MCF 10A (cell line): ENCODE measurements at regions of chr10 and their contacts with region 1.

Region 1: DNA sequence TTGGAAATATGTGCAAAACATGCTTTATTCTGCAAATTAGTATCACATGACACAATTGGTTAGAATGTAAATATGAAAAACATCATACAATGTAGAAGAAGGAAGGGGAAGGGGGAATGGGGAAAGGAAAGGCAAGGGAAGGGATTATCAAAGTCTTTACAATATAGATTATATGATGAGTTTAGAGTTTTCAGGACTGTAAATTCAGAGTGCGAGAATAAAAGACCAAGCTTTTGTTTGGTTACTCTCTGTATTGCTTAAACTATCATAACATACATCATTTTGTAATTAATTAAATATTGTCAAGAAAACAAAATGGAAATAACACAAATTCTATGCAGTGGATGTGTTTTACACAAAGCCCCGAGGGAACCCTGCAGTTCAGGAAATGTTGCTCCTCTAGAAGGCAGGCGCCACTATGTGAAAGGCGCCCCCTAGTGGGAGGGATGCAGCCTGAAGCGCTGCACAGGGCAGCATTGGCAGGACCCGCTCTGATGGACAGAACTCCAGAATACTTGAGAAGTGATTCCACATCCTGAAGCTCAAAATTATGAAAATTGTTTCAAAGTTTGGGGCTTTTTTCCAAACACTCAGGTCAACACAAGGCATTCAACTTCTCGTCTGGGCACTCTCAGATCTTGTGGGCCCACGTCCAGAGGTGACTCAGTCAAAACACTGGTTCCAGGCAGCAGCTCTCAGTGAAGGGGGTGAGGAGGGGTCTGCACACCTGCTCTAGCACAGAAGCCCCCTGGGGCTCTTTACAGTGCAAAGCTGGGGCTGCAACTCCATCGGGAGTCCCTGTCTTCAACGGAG is 31.6 kb upstream of the TMEM254 start:
- DNase-seq: peak; percentile 78
- H3K4me3 Mint-ChIP-seq: no peak overlapping the region
- H3K27ac Mint-ChIP-seq: no peak overlapping the region
- H3K4me1 Mint-ChIP-seq: no peaks in the 10 kb centered on the region
- H3K27me3 Mint-ChIP-seq: no peaks in the 10 kb centered on the region
- CTCF ChIP-seq: peak; percentile 91

Region 2: GRCh38 chr10:79542626-79543025 is 504.2 kb before region 1 on chr10:
- CTCF ChIA-PET with region 1: no interaction called
- POLR2A ChIA-PET with region 1: no interaction called
- intact Hi-C with region 1: loop called (anchors 5 kb)
- DNase-seq: no peak
- H3K4me3 Mint-ChIP-seq: no peak overlapping the region
- H3K27ac Mint-ChIP-seq: no peak overlapping the region
- H3K4me1 Mint-ChIP-seq: no peaks in the 10 kb centered on the region
- H3K27me3 Mint-ChIP-seq: peaks cover 37% of the 10 kb centered on the region
- CTCF ChIP-seq: no peak

Region 3: DNA sequence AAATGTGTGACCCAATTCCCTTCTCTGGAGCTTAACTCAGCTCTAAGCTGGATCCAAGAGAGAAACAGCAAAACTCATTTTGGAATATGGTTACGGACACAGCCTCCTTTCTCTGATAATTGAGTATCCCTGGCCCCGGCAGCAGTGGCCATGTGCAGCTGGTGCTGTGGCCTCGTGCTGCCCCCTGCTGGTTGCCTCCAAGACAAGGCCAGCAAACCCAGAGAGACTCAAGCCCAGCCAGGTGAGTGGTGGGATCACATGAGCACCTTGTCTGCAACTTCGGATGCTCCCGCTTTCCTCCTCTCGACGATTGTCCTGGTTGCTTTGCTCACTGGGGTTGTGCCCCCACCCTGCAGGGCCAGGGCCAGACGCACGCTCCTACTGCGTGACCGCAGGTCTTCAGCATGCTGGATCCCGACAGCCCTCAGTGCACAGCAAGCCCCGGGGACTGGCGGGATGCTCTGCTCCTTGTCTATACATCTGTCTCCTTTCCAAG is 117.4 kb before region 1 on chr10:
- CTCF ChIA-PET with region 1: interaction called, 7 read pairs
- POLR2A ChIA-PET with region 1: no interaction called
- intact Hi-C with region 1: loop called (anchors 5 kb)
- DNase-seq: peak; percentile 74
- H3K4me3 Mint-ChIP-seq: no peak overlapping the region
- H3K27ac Mint-ChIP-seq: no peak overlapping the region
- H3K4me1 Mint-ChIP-seq: peaks cover 14% of the 10 kb centered on the region
- H3K27me3 Mint-ChIP-seq: peaks cover 45% of the 10 kb centered on the region
- CTCF ChIP-seq: peak; percentile 91

Region 4: GRCh38 chr10:80025281-80025680 is 21.6 kb before region 1 on chr10:
- CTCF ChIA-PET with region 1: interaction called, 13 read pairs
- POLR2A ChIA-PET with region 1: no interaction called
- intact Hi-C with region 1: no loop called
- DNase-seq: no peak
- H3K4me3 Mint-ChIP-seq: no peak overlapping the region
- H3K27ac Mint-ChIP-seq: no peak overlapping the region
- H3K4me1 Mint-ChIP-seq: no peaks in the 10 kb centered on the region
- H3K27me3 Mint-ChIP-seq: no peaks in the 10 kb centered on the region
- CTCF ChIP-seq: no peak

Region 5: DNA sequence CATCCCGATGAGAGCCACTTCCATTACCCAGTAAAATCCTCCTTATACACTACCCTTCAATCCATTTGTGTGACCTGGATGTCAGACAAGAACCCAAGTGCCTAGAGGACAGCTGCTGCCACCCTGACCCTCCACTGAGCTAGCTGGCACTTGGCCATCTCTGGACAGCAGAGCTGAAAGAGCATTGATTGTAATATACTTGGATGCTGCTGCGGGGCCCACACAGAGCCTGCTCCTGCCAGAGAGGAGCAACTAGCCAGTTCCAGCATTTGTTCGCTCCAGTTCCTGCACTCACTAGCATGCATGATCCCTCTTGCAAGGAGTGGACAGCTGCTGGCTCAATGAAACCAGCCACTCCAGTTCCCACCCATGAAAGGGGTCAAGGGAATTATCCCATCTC is 23.2 kb after region 1 on chr10:
- CTCF ChIA-PET with region 1: interaction called, 15 read pairs
- POLR2A ChIA-PET with region 1: interaction called, 3 read pairs
- intact Hi-C with region 1: no loop called
- DNase-seq: no peak
- H3K4me3 Mint-ChIP-seq: no peak overlapping the region
- H3K27ac Mint-ChIP-seq: no peak overlapping the region
- H3K4me1 Mint-ChIP-seq: no peaks in the 10 kb centered on the region
- H3K27me3 Mint-ChIP-seq: no peaks in the 10 kb centered on the region
- CTCF ChIP-seq: no peak

Region 6: DNA sequence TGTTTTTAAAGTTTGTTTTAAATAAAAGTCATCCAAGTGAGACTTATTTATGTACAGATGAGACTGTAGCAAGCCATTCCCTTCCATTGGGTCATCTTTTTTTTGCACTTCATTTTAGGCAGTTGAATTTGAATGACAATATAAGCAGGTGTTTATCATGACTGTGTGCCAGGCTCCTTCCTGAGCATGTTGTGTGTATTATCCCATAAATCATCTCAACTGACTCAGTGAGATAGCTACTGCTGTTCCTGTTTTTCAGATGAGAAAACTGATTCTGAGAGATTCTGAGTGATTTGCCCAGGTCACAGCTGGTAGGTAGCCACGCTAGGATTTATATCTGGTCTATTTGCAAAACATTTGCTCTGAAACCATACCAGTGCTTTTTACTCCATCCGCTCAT is 43.3 kb after region 1 on chr10:
- CTCF ChIA-PET with region 1: no interaction called
- POLR2A ChIA-PET with region 1: no interaction called
- intact Hi-C with region 1: no loop called
- DNase-seq: no peak
- H3K4me3 Mint-ChIP-seq: no peak overlapping the region
- H3K27ac Mint-ChIP-seq: no peak overlapping the region
- H3K4me1 Mint-ChIP-seq: no peaks in the 10 kb centered on the region
- H3K27me3 Mint-ChIP-seq: no peaks in the 10 kb centered on the region
- CTCF ChIP-seq: no peak

Region 7: GRCh38 chr10:80205478-80206276 is 158.8 kb after region 1 on chr10 and contains the start of gene ANXA11:
- CTCF ChIA-PET with region 1: no interaction called
- POLR2A ChIA-PET with region 1: no interaction called
- intact Hi-C with region 1: no loop called
- DNase-seq: peak; percentile 80
- H3K4me3 Mint-ChIP-seq: peak within 1 kb of the TSS; percentile 77
- H3K27ac Mint-ChIP-seq: peak within 1 kb of the TSS; percentile 88
- H3K4me1 Mint-ChIP-seq: peaks cover 40% of the 10 kb centered on the region
- H3K27me3 Mint-ChIP-seq: no peaks in the 10 kb centered on the region
- CTCF ChIP-seq: no peak
- total RNA-seq, gene ANXA11: 68.5 and 93.8 TPM in 2 replicates